ENCODE measurements at regions of chr14 and their contacts with region 1.

Region 1: GRCh38 chr14:53055003-53055402 is 98.1 kb downstream of the DDHD1 start:
- DNase-seq: no peak
- ATAC-seq: peak; percentile 69
- H3K4me3 Mint-ChIP-seq: no peak overlapping the region
- H3K27ac Mint-ChIP-seq: no peak overlapping the region
- H3K4me1 Mint-ChIP-seq: peaks cover 4% of the 10 kb centered on the region
- H3K27me3 Mint-ChIP-seq: no peaks in the 10 kb centered on the region

Region 2: DNA sequence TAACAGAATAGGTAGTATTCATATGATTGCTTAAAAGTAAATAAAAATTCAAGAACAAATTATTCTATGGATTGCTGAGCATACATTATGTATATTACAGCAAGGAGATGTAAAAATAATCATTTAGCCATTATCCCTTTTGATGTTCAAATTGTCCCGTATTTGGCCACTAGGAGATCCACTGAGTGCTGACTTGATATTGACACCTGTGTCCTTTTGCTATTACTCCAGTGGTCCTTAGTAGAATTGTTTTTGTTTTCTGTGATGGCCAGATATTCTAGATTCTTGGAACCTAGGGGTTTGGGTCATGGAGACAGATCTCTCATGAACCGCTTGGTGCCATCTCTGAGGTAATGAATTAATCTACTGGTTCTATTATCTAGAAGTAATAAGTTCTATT is 376.4 kb before region 1 on chr14:
- CTCF ChIA-PET with region 1: no interaction called
- DNase-seq: no peak
- ATAC-seq: peak; percentile 27
- H3K4me3 Mint-ChIP-seq: no peak overlapping the region
- H3K27ac Mint-ChIP-seq: no peak overlapping the region
- H3K4me1 Mint-ChIP-seq: peaks cover 3% of the 10 kb centered on the region
- H3K27me3 Mint-ChIP-seq: no peaks in the 10 kb centered on the region

Region 3: GRCh38 chr14:52780893-52781292 is 274.1 kb before region 1 on chr14:
- CTCF ChIA-PET with region 1: no interaction called
- DNase-seq: no peak
- ATAC-seq: no peak
- H3K4me3 Mint-ChIP-seq: no peak overlapping the region
- H3K27ac Mint-ChIP-seq: no peak overlapping the region
- H3K4me1 Mint-ChIP-seq: no peaks in the 10 kb centered on the region
- H3K27me3 Mint-ChIP-seq: no peaks in the 10 kb centered on the region

Region 4: GRCh38 chr14:52824507-52824906 is 230.5 kb before region 1 on chr14:
- CTCF ChIA-PET with region 1: interaction called, 14 read pairs
- DNase-seq: no peak
- ATAC-seq: no peak
- H3K4me3 Mint-ChIP-seq: no peak overlapping the region
- H3K27ac Mint-ChIP-seq: no peak overlapping the region
- H3K4me1 Mint-ChIP-seq: peaks cover 6% of the 10 kb centered on the region
- H3K27me3 Mint-ChIP-seq: peaks cover 14% of the 10 kb centered on the region

Region 5: GRCh38 chr14:53126731-53127130 is 71.7 kb after region 1 on chr14:
- CTCF ChIA-PET with region 1: no interaction called
- DNase-seq: no peak
- ATAC-seq: peak; percentile 42
- H3K4me3 Mint-ChIP-seq: peak overlapping the region; percentile 62
- H3K27ac Mint-ChIP-seq: peak overlapping the region; percentile 79
- H3K4me1 Mint-ChIP-seq: peaks cover 31% of the 10 kb centered on the region
- H3K27me3 Mint-ChIP-seq: no peaks in the 10 kb centered on the region

Region 6: GRCh38 chr14:53152890-53153701 is 98.1 kb after region 1 on chr14 and contains the start of gene DDHD1:
- CTCF ChIA-PET with region 1: interaction called, 11 read pairs
- DNase-seq: peak; percentile 86
- ATAC-seq: peak; percentile 81
- H3K4me3 Mint-ChIP-seq: peak within 1 kb of the TSS; percentile 100
- H3K27ac Mint-ChIP-seq: peak within 1 kb of the TSS; percentile 99
- H3K4me1 Mint-ChIP-seq: peaks cover 34% of the 10 kb centered on the region
- H3K27me3 Mint-ChIP-seq: no peaks in the 10 kb centered on the region
- total RNA-seq, gene DDHD1: 70.7 to 80.5 TPM

Region 7: DNA sequence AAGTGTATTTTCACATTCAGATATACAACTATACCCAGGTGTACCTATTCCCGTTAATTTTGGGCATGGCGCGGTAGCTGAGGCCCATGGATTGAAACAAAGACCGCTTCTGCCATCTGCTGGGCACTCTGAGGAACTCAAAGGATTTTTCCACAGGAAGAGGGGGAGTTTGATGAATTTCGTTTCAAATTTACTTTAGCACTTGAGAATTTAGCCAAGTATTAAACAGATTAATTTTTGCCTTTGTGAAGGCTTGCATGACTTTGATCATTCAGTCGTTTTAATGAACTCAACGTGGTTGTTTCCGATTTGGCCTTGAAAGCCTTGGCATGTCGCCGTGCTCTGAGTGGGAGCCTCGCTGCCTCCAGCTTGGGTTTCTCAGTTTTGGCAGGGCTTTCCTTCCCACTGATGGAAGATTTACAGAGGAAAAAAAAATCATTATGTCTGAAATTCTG is 251.3 kb after region 1 on chr14:
- CTCF ChIA-PET with region 1: interaction called, 14 read pairs
- DNase-seq: peak; percentile 47
- ATAC-seq: peak; percentile 55
- H3K4me3 Mint-ChIP-seq: peak overlapping the region; percentile 54
- H3K27ac Mint-ChIP-seq: no peak overlapping the region
- H3K4me1 Mint-ChIP-seq: peaks cover 18% of the 10 kb centered on the region
- H3K27me3 Mint-ChIP-seq: peaks cover 3% of the 10 kb centered on the region

Measured in activated CD8-positive, alpha-beta memory T cell treated with anti-CD3 and anti-CD28 coated beads, Interleukin-2, amount 10 ng/mL, durations not matched to agents 7 days and 5 days (primary cell).